ENCODE measurements at regions of chr5 and their contacts with region 1.

Region 1: DNA sequence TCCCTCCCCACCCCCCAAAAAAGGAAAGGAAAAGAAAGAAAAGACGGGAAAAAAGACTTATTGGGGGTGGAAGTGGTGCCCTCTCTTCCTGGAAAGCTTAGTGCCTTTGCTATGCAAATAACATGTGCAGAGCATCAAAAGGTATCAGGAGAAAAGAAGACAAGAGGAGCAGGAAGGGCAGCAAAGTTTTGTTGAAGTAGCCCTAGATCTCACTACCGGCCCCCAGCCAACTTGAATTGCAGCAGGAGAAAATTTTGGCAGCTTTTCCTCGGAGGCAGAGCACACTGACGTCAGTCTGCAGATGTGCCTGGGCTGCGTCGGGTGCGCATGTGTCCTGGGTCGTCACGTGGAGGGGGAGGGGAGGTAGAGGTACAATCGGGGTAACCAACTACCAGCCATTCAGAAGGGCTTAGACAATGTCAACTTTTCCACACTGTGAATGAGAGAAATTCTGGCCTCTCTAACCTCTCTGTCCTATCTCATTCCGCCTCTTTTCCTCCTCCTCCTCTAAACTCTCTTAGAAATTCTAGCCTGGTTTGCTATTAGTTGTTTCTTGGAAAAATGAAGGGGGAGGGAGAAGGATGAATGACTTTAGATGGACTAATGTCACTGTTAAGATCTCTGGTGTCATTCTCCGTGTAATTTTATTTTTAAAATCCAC is at the start of gene ADAMTS6:
- DNase-seq: peak; percentile 63
- H3K4me3 Mint-ChIP-seq: no peak within 1 kb of the TSS
- H3K27ac Mint-ChIP-seq: peak within 1 kb of the TSS; percentile 28
- H3K4me1 Mint-ChIP-seq: no peaks in the 10 kb centered on the region
- H3K27me3 Mint-ChIP-seq: no peaks in the 10 kb centered on the region
- CTCF ChIP-seq: no peak
- total RNA-seq, gene ADAMTS6: 0.86 and 1.2 TPM in 2 replicates

Region 2: GRCh38 chr5:64790210-64790609 is 691.6 kb before region 1 on chr5:
- CTCF ChIA-PET with region 1: interaction called, 3 read pairs
- intact Hi-C with region 1: loop called (anchors 5 kb)
- DNase-seq: no peak
- H3K4me3 Mint-ChIP-seq: no peak overlapping the region
- H3K27ac Mint-ChIP-seq: no peak overlapping the region
- H3K4me1 Mint-ChIP-seq: peaks cover 36% of the 10 kb centered on the region
- H3K27me3 Mint-ChIP-seq: no peaks in the 10 kb centered on the region
- CTCF ChIP-seq: no peak

Region 3: DNA sequence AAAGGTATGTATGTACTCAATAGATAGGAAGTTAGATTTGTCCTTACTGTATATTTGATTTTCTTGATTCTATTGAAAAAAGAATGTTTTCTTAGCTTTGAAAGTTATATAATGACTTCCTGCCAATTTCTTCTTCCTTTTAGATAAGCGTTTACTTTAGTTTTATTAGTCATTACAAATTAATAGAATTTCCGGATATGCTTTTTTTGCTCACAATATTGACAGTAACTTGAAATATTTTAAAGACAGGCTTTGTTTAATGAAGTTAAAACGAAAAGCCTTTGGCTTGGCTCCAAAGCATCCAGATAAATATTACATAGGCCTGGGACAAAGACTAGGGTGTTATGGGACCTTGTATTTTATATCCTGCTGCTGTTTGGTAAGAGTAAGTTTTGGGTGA is 663.5 kb before region 1 on chr5:
- CTCF ChIA-PET with region 1: interaction called, 4 read pairs
- intact Hi-C with region 1: loop called (anchors 2 kb)
- DNase-seq: no peak
- H3K4me3 Mint-ChIP-seq: no peak overlapping the region
- H3K27ac Mint-ChIP-seq: no peak overlapping the region
- H3K4me1 Mint-ChIP-seq: peaks cover 40% of the 10 kb centered on the region
- H3K27me3 Mint-ChIP-seq: no peaks in the 10 kb centered on the region
- CTCF ChIP-seq: no peak

Region 4: GRCh38 chr5:65035211-65036206 is 446.3 kb before region 1 on chr5:
- CTCF ChIA-PET with region 1: interaction called, 3 read pairs
- intact Hi-C with region 1: loop called (anchors 5 kb)
- DNase-seq: peak; percentile 93
- H3K4me3 Mint-ChIP-seq: peak overlapping the region; percentile 87
- H3K27ac Mint-ChIP-seq: peak overlapping the region; percentile 68
- H3K4me1 Mint-ChIP-seq: peaks cover 8% of the 10 kb centered on the region
- H3K27me3 Mint-ChIP-seq: no peaks in the 10 kb centered on the region
- CTCF ChIP-seq: no peak

Region 5: GRCh38 chr5:65102828-65103711 is 378.7 kb before region 1 on chr5:
- CTCF ChIA-PET with region 1: interaction called, 7 read pairs
- intact Hi-C with region 1: loop called (anchors 1 kb)
- DNase-seq: peak; percentile 71
- H3K4me3 Mint-ChIP-seq: peak overlapping the region; percentile 68
- H3K27ac Mint-ChIP-seq: peak overlapping the region; percentile 71
- H3K4me1 Mint-ChIP-seq: no peaks in the 10 kb centered on the region
- H3K27me3 Mint-ChIP-seq: no peaks in the 10 kb centered on the region
- CTCF ChIP-seq: peak; percentile 29

Measured in Calu3 (cell line).